ENCODE measurements at regions of chr7 and their contacts with region 1.

Region 1: GRCh38 chr7:13279854-13280435 is 592.5 kb downstream of the ARL4A start:
- DNase-seq: peak in 4 of 5 donors; percentile 6 to 36 (median 26)
- H3K4me3 ChIP-seq: no peak overlapping the region
- H3K4me3 Mint-ChIP-seq: no peak overlapping the region
- H3K27ac ChIP-seq: no peak overlapping the region
- H3K27ac Mint-ChIP-seq: no peak overlapping the region
- H3K4me1 ChIP-seq: no peaks in the 10 kb centered on the region
- H3K4me1 Mint-ChIP-seq: no peaks in the 10 kb centered on the region
- H3K27me3 ChIP-seq: no peaks in the 10 kb centered on the region
- H3K27me3 Mint-ChIP-seq: peaks cover 2 to 4% of the 10 kb centered on the region in 2 donors

Region 2: GRCh38 chr7:13651167-13651566 is 371.2 kb after region 1 on chr7:
- CTCF ChIA-PET with region 1: no interaction called
- POLR2A ChIA-PET with region 1: no interaction called
- intact Hi-C with region 1: loop called (anchors 10 kb)
- DNase-seq: no peak
- H3K4me3 ChIP-seq: no peak overlapping the region
- H3K4me3 Mint-ChIP-seq: no peak overlapping the region
- H3K27ac ChIP-seq: no peak overlapping the region
- H3K27ac Mint-ChIP-seq: no peak overlapping the region
- H3K4me1 ChIP-seq: no peaks in the 10 kb centered on the region
- H3K4me1 Mint-ChIP-seq: no peaks in the 10 kb centered on the region
- H3K27me3 ChIP-seq: no peaks in the 10 kb centered on the region
- H3K27me3 Mint-ChIP-seq: no peaks in the 10 kb centered on the region

Region 3: GRCh38 chr7:14691597-14692203 is 1411.8 kb after region 1 on chr7:
- CTCF ChIA-PET with region 1: interaction called, 49 read pairs
- POLR2A ChIA-PET with region 1: no interaction called
- intact Hi-C with region 1: loop called (anchors 1 kb)
- DNase-seq: peak in 4 of 5 donors; percentile 3 to 37 (median 20)
- H3K4me3 ChIP-seq: no peak overlapping the region
- H3K4me3 Mint-ChIP-seq: no peak overlapping the region
- H3K27ac ChIP-seq: no peak overlapping the region
- H3K27ac Mint-ChIP-seq: no peak overlapping the region
- H3K4me1 ChIP-seq: no peaks in the 10 kb centered on the region
- H3K4me1 Mint-ChIP-seq: no peaks in the 10 kb centered on the region
- H3K27me3 ChIP-seq: peaks cover 3% of the 10 kb centered on the region
- H3K27me3 Mint-ChIP-seq: peaks cover 0 to 2% of the 10 kb centered on the region in 2 donors

Measured in CD4-positive, alpha-beta memory T cell (primary cell).